A673 (cell line): ENCODE measurements at regions of chr10 and their contacts with region 1.

Region 1: GRCh38 chr10:119199231-119199992 is 8.0 kb upstream of the GRK5 start:
- DNase-seq: peak; percentile 86
- H3K4me3 ChIP-seq: no peak overlapping the region
- H3K27ac ChIP-seq: no peak overlapping the region
- H3K4me1 ChIP-seq: peaks cover 14% of the 10 kb centered on the region
- H3K27me3 ChIP-seq: no peaks in the 10 kb centered on the region
- CTCF ChIP-seq: peak; percentile 86

Region 2: GRCh38 chr10:119041326-119041725 is 158.1 kb before region 1 on chr10:
- CTCF ChIA-PET with region 1: no interaction called
- POLR2A ChIA-PET with region 1: no interaction called
- intact Hi-C with region 1: no loop called
- DNase-seq: no peak
- H3K4me3 ChIP-seq: no peak overlapping the region
- H3K27ac ChIP-seq: no peak overlapping the region
- H3K4me1 ChIP-seq: no peaks in the 10 kb centered on the region
- H3K27me3 ChIP-seq: no peaks in the 10 kb centered on the region
- CTCF ChIP-seq: no peak

Region 3: DNA sequence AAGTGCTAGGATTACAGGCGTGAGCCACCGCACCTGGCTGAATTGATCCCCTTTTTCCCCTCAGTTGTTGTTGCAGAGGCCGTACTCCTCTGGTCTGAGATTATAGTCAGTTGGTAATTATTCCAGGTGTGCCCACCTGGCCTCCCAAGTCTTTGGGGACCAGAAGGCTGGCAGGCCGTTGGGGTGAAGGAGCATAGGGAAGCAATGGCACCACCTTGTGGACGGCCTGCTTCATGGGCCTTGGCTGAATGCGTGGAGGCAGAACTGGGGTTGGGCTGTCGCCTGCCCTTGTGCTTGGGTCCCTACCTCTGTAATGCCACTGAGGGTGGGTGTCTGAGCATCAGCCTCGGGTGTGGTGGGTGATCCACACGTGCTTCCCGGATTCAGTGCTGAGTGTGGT is 217.4 kb after region 1 on chr10:
- CTCF ChIA-PET with region 1: interaction called, 7 read pairs
- POLR2A ChIA-PET with region 1: no interaction called
- intact Hi-C with region 1: loop called (anchors 2 kb)
- DNase-seq: peak; percentile 66
- H3K4me3 ChIP-seq: no peak overlapping the region
- H3K27ac ChIP-seq: no peak overlapping the region
- H3K4me1 ChIP-seq: peaks cover 12% of the 10 kb centered on the region
- H3K27me3 ChIP-seq: no peaks in the 10 kb centered on the region
- CTCF ChIP-seq: peak; percentile 81

Region 4: DNA sequence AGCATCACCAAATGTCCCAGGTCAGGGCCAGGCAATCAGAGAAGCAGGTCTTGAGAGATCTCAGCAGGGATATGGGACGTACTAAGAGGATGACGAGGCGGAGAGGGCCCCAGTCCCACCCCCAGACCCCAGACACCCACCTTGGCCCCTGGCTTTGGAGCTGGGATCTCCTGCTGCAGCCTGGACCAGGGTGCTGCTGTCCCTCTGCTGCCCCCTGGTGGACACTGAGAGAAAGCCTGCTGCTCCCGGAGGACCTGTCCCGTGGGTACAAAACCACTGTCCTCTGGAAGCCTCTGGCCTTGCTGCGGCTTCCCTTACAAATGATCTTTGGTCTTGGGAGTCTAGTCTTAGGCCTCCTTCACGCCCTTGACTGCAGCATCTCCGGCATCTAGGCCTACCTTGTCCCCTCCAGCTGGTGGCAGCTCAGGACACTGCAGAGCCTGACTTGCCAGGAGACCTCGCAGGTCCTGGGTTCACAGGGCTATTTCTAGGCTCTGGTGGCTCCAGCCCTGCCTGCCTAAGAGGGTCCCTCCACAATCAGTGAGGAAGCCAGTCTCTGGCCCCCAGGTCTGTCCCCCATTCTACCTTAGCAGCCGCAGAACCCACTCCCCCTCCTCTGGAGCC is 246.0 kb after region 1 on chr10:
- CTCF ChIA-PET with region 1: interaction called, 35 read pairs
- POLR2A ChIA-PET with region 1: no interaction called
- intact Hi-C with region 1: loop called (anchors 1 kb)
- DNase-seq: peak; percentile 78
- H3K4me3 ChIP-seq: no peak overlapping the region
- H3K27ac ChIP-seq: no peak overlapping the region
- H3K4me1 ChIP-seq: no peaks in the 10 kb centered on the region
- H3K27me3 ChIP-seq: no peaks in the 10 kb centered on the region
- CTCF ChIP-seq: peak; percentile 93

Region 5: GRCh38 chr10:119489991-119490326 is 290.5 kb after region 1 on chr10:
- CTCF ChIA-PET with region 1: interaction called, 29 read pairs
- POLR2A ChIA-PET with region 1: no interaction called
- intact Hi-C with region 1: loop called (anchors 1 kb)
- DNase-seq: no peak
- H3K4me3 ChIP-seq: no peak overlapping the region
- H3K27ac ChIP-seq: no peak overlapping the region
- H3K4me1 ChIP-seq: peaks cover 6% of the 10 kb centered on the region
- H3K27me3 ChIP-seq: no peaks in the 10 kb centered on the region
- CTCF ChIP-seq: peak; percentile 16; the same call in 1 of the 2 replicates

Region 6: DNA sequence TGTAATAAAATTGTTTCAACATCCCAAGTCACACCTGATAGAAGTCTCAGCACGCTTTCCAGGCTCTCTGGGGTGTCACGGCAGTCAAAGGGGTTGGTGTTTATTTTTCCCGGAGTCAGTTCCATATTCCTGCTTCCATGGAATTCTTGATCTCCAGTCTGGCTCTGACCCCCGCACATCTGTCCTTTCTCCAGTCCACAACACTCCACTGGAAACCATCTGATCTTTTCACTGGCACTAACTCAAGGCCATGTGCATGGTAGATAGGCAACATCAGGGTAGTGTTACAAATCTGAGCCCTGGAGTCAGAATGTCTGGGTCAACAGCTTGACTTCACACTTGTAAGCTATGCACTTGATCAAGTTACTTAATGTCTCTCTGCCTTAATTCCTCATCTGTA is 1828.0 kb after region 1 on chr10:
- CTCF ChIA-PET with region 1: no interaction called
- POLR2A ChIA-PET with region 1: no interaction called
- intact Hi-C with region 1: no loop called
- DNase-seq: no peak
- H3K4me3 ChIP-seq: no peak overlapping the region
- H3K27ac ChIP-seq: no peak overlapping the region
- H3K4me1 ChIP-seq: no peaks in the 10 kb centered on the region
- H3K27me3 ChIP-seq: peaks cover 12% of the 10 kb centered on the region
- CTCF ChIP-seq: no peak